Activated B cell treated with CpG ODN at 0.5 μM for 24 hours (primary cell): ENCODE measurements at regions of chr7 and their contacts with region 1.

Region 1: DNA sequence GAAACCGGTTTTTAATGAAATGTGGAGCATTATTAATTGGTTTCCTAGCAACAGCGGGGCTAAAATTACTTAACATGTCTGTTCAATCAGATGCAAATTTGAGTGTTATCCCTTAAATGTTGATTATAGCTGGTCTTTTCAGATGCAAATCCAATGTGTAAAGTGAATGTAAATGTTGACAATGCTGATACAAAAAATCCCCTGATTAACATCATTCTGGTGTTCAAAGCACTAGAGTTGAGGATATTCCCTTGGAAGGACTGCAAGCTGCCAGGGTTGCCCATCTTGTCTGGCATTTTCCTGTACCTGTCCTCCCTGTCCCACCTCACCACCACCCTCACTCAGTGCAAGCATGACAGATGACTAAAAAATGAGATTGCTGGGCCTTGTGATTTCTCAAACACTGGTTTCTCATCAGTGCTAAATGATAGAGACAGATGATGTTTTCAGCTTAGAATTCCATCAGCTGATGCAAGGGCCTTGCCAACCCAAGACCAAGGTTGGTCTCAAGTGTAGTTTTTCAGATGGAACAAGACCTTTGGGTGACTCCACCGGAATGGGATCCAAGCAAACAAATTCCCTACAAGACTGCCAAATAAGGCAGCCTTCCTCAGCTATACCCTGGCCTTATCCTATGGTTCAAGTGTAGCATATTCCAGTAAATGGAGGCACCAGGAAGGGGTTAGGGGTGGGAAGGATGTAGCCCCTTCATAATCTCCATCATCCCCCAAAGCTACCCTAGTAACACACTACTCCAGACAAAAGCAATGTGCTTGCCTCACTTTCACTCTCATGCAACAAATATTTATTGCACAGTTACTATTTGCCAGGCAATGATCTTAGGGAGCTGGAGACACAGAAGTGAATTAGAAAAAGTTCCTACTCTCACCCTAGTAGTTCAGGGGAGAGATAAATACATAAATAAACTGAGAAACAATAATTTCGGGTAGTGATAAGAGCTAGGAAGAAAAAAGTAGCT is 54.9 kb downstream of the JAZF1 start:
- DNase-seq: no peak
- ATAC-seq: no peak
- H3K4me3 Mint-ChIP-seq: no peak overlapping the region
- H3K27ac Mint-ChIP-seq: peak overlapping the region; percentile 13
- H3K4me1 Mint-ChIP-seq: peaks cover 97% of the 10 kb centered on the region
- H3K27me3 Mint-ChIP-seq: no peaks in the 10 kb centered on the region
- CTCF ChIP-seq: no peak

Region 2: GRCh38 chr7:28144266-28144665 is 18.5 kb after region 1 on chr7:
- CTCF ChIA-PET with region 1: interaction called, 5 read pairs
- POLR2A ChIA-PET with region 1: no interaction called
- intact Hi-C with region 1: loop called (anchors 2 kb)
- DNase-seq: no peak
- ATAC-seq: peak; percentile 76
- H3K4me3 Mint-ChIP-seq: no peak overlapping the region
- H3K27ac Mint-ChIP-seq: no peak overlapping the region
- H3K4me1 Mint-ChIP-seq: peaks cover 61% of the 10 kb centered on the region
- H3K27me3 Mint-ChIP-seq: no peaks in the 10 kb centered on the region
- CTCF ChIP-seq: no peak

Region 3: DNA sequence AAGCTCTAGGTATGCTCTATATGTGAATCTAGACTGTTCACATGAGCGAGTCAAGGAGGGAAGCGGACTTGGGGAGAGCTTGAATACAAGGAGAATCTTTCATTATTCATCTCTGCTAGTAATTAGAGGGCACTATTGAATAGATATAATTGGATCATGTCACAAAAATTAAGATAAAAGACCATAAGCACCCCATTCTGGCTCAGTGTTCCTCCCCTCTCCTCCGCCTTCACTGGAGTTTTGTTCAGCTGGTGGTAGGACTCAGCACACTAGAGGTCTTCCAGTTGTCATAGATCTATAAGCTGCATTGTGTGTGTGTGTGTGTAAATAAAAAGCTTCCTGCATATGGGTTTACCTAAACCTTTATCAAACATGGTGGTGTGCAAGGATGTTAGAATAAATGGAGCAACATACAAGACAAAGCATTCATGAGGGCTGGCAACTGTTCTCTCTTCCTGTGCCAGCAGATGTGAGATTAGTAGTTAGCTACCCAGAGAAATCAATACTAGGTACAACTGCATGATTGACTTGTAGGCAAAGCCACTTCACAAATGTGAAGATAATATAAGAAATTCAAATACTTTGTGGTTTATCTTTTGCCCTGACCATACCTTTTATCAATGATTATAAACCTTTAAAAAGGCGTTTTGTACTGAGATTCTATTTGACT is 429.2 kb after region 1 on chr7:
- CTCF ChIA-PET with region 1: no interaction called
- POLR2A ChIA-PET with region 1: interaction called, 10 read pairs
- intact Hi-C with region 1: no loop called
- DNase-seq: no peak
- ATAC-seq: no peak
- H3K4me3 Mint-ChIP-seq: no peak overlapping the region
- H3K27ac Mint-ChIP-seq: no peak overlapping the region
- H3K4me1 Mint-ChIP-seq: no peaks in the 10 kb centered on the region
- H3K27me3 Mint-ChIP-seq: peaks cover 13% of the 10 kb centered on the region
- CTCF ChIP-seq: no peak